Sciatic nerve (tissue), 2 donors: ENCODE measurements at regions of chr15 and their contacts with region 1.

Region 1: GRCh38 chr15:37733628-37734027 is 200.8 kb upstream of the TMCO5A start:
- DNase-seq: no peak
- ATAC-seq: no peak

Region 2: DNA sequence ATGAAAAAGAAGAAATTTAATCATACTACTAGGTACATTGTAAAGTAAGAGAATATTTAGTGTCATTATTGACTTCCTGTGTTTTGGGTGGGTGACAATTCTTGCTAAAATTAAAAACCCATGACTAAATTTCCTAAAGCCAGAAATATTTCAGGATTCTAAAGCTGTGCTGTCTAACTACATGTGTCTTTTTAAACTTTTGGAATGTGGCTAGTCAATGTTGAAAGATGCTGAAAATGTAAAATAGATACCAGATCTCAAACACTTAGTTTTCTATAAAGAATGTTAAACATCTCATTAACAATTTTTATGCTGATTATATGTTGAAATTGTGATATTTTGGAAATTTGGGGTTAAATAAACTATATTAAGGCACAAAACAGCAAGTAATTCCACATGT is 108.1 kb before region 1 on chr15:
- intact Hi-C with region 1: no loop called
- DNase-seq: no peak
- ATAC-seq: no peak

Region 3: GRCh38 chr15:39381517-39381916 is 1647.9 kb after region 1 on chr15:
- intact Hi-C with region 1: loop called (anchors 10 kb)
- DNase-seq: no peak
- ATAC-seq: no peak

Region 4: GRCh38 chr15:39704689-39705088 is 1971.1 kb after region 1 on chr15:
- intact Hi-C with region 1: no loop called
- DNase-seq: no peak
- ATAC-seq: no peak